ENCODE measurements at regions of chr20 and their contacts with region 1.

Region 1: DNA sequence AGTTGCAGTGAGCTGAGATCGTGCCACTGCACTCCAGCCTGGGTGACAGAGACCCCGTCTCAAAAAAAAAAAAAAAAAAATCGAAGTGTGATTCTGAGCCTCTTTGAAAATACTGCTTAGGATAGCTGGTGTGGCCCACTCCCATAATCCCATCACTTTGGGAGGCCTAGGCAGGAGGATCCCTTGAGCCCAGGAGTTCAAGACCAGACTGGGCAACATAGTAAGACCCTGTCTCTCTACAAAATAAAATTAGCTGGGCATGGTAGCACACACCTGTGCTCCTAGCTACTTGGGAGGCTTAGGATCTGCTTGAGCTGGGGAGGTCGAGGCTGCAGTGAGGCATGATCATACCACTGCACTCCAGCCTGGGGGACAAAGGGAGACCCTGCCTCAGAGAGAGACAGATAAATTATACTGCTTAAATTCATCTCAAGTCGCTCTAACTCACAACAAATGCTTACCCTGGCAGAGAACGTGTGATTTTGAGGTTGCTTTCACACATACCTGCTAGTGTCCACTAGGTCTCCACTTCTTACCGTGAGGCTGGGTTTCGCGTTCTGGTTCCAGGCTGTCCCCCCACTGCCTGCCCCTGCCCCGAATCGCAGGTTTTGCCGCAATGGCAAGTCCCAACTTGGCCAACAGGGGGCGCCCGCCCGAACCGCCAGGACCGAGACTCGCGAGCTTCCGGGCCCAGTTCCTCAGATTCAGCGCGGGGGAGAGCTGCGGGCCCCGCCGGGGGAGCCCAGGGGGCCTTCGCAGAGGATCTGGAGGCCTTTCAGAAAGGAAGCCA is 12.3 kb upstream of the TMC2 start:
- DNase-seq: peak; percentile 93
- ATAC-seq: peak; percentile 68
- H3K4me3 Mint-ChIP-seq: peak overlapping the region; percentile 74
- H3K27ac Mint-ChIP-seq: peak overlapping the region; percentile 86
- H3K4me1 Mint-ChIP-seq: peaks cover 7% of the 10 kb centered on the region
- H3K27me3 Mint-ChIP-seq: peaks cover 6% of the 10 kb centered on the region
- CTCF ChIP-seq: peak; percentile 84

Region 2: DNA sequence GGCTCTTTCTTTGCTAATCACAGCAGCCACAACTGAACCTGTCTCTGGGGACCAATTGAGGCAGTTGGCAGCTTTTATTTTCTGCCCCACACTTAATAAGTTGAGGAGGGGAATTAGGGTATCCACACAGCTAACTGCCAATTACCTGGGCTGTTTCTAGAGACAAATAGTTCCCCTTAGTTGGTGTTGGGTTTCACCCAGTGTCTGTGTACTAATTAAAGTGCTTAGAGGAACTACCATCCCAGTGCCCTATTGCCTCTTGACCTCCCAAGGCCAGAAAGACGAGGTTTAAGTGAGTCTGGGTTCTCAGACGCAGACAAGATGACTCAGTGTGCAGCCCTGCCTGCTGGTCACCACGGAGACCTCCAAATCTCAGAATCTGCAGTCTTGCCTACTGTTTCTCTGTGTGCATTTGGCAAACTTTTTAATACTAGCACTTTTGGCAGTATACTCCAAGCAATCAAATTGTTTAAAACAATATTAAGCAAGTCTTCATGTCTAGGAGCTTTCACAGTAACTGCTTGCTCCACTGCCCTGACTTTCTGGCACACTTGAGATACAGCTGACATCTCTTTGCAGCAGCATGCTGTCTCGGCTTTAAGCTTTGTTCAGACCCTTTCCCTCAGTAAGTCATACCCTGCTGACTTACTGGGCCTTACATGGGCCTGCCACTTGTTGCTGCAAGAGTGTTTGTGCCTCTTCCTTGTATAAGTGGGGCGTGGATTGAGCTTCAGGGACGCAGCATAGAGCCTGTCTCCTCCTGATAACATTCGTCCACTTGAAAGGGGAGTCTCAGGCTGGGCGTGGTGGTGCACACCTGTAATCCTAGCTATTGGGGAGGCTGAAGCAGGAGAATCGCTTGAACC is 390.6 kb before region 1 on chr20:
- CTCF ChIA-PET with region 1: no interaction called
- POLR2A ChIA-PET with region 1: no interaction called
- intact Hi-C with region 1: no loop called
- DNase-seq: no peak
- ATAC-seq: no peak
- H3K4me3 Mint-ChIP-seq: no peak overlapping the region
- H3K27ac Mint-ChIP-seq: no peak overlapping the region
- H3K4me1 Mint-ChIP-seq: peaks cover 32% of the 10 kb centered on the region
- H3K27me3 Mint-ChIP-seq: no peaks in the 10 kb centered on the region
- CTCF ChIP-seq: no peak

Region 3: GRCh38 chr20:2470423-2471193 is 53.5 kb before region 1 on chr20 and contains the start of gene SNRPB:
- CTCF ChIA-PET with region 1: interaction called, 53 read pairs
- POLR2A ChIA-PET with region 1: interaction called, 10 read pairs
- intact Hi-C with region 1: no loop called
- DNase-seq: peak; percentile 97
- ATAC-seq: peak; percentile 98
- H3K4me3 Mint-ChIP-seq: peak within 1 kb of the TSS; percentile 89
- H3K27ac Mint-ChIP-seq: peak within 1 kb of the TSS; percentile 100
- H3K4me1 Mint-ChIP-seq: peaks cover 51% of the 10 kb centered on the region
- H3K27me3 Mint-ChIP-seq: no peaks in the 10 kb centered on the region
- CTCF ChIP-seq: no peak
- total RNA-seq, gene SNRPB: 469 to 479 TPM

Region 4: GRCh38 chr20:2485661-2486060 is 38.5 kb before region 1 on chr20:
- CTCF ChIA-PET with region 1: interaction called, 11 read pairs
- POLR2A ChIA-PET with region 1: no interaction called
- intact Hi-C with region 1: no loop called
- DNase-seq: no peak
- ATAC-seq: no peak
- H3K4me3 Mint-ChIP-seq: no peak overlapping the region
- H3K27ac Mint-ChIP-seq: no peak overlapping the region
- H3K4me1 Mint-ChIP-seq: no peaks in the 10 kb centered on the region
- H3K27me3 Mint-ChIP-seq: no peaks in the 10 kb centered on the region
- CTCF ChIP-seq: no peak

Region 5: GRCh38 chr20:2544211-2544610 is 20.1 kb after region 1 on chr20:
- CTCF ChIA-PET with region 1: interaction called, 25 read pairs
- POLR2A ChIA-PET with region 1: no interaction called
- intact Hi-C with region 1: no loop called
- DNase-seq: no peak
- ATAC-seq: no peak
- H3K4me3 Mint-ChIP-seq: no peak overlapping the region
- H3K27ac Mint-ChIP-seq: no peak overlapping the region
- H3K4me1 Mint-ChIP-seq: no peaks in the 10 kb centered on the region
- H3K27me3 Mint-ChIP-seq: peaks cover 34% of the 10 kb centered on the region
- CTCF ChIP-seq: no peak

Region 6: DNA sequence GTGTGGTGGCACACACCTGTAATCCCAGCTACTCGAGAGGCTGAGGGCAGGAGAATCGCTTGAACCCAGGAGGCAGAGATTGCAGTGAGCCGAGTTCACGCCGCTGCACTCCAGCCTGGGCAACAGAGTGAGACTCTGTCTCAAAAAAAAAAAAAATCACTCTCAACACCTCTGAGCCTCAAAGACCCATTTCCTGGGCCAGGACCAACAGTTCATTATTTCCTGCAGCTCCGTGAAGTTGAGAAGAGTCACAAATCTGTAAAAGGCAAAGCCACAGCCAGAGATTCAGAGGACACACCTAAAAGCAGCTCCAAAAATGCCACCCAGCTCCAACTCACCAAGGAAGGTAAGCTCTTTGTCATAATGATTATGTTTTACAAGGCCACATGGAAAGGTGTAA is 113.1 kb after region 1 on chr20:
- CTCF ChIA-PET with region 1: interaction called, 12 read pairs
- POLR2A ChIA-PET with region 1: no interaction called
- intact Hi-C with region 1: loop called (anchors 10 kb)
- DNase-seq: no peak
- ATAC-seq: no peak
- H3K4me3 Mint-ChIP-seq: no peak overlapping the region
- H3K27ac Mint-ChIP-seq: no peak overlapping the region
- H3K4me1 Mint-ChIP-seq: no peaks in the 10 kb centered on the region
- H3K27me3 Mint-ChIP-seq: peaks cover 11% of the 10 kb centered on the region
- CTCF ChIP-seq: no peak

Region 7: GRCh38 chr20:2651772-2652723 is 127.9 kb after region 1 on chr20 and contains the start of gene NOP56:
- CTCF ChIA-PET with region 1: interaction called, 103 read pairs
- POLR2A ChIA-PET with region 1: interaction called, 23 read pairs
- intact Hi-C with region 1: loop called (anchors 10 kb)
- DNase-seq: peak; percentile 93
- ATAC-seq: peak; percentile 91
- H3K4me3 Mint-ChIP-seq: peak within 1 kb of the TSS; percentile 89
- H3K27ac Mint-ChIP-seq: peak within 1 kb of the TSS; percentile 90
- H3K4me1 Mint-ChIP-seq: peaks cover 40% of the 10 kb centered on the region
- H3K27me3 Mint-ChIP-seq: no peaks in the 10 kb centered on the region
- CTCF ChIP-seq: no peak
- total RNA-seq, gene NOP56: 587 to 596 TPM

Region 8: DNA sequence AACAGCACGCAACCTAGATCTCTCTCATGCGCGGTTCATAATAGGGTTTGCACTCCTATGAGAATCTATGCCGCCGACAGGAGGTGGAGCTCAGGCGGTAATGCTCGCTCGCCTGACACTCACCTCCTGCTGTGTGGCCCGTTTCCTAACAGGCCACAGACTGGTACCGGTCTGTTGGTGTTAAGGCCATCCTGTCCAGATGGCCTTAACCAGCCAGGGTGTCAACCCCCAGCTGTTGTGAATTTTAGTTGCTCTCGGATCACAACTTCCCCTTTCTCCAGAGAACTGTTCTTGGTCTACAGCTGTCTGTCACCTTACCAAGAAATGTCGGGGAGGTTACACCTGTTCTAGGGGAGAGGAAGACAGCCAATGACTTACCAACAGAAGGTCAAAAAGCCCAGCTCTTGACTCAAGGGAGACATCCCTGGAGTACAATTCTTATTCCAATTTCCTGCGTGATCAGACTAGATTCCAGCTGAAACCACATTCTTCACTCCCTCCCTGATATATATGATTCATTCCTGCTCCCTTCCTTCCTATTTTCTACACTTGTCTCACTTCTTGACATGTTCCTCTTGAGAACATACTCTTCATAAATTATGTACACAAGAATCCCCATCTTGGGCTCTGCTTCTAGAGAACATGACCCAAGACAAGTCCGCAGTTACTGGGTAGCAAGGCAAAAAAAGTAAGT is 906.4 kb after region 1 on chr20:
- CTCF ChIA-PET with region 1: no interaction called
- POLR2A ChIA-PET with region 1: no interaction called
- intact Hi-C with region 1: no loop called
- DNase-seq: no peak
- ATAC-seq: no peak
- H3K4me3 Mint-ChIP-seq: no peak overlapping the region
- H3K27ac Mint-ChIP-seq: no peak overlapping the region
- H3K4me1 Mint-ChIP-seq: no peaks in the 10 kb centered on the region
- H3K27me3 Mint-ChIP-seq: peaks cover 9% of the 10 kb centered on the region
- CTCF ChIP-seq: no peak